Dendritic cell treated with granulocyte-macrophage colony-stimulating factor and Interleukin-4, amounts not matched to agents 40 ng/mL and 50 ng/mL, for 4 days (primary cell): ENCODE measurements at regions of chr10 and their contacts with region 1.

Region 1: GRCh38 chr10:98858525-98858924 is 377.1 kb downstream of the HPSE2 start:
- H3K4me3 Mint-ChIP-seq: no peak overlapping the region
- H3K27ac Mint-ChIP-seq: no peak overlapping the region
- H3K4me1 Mint-ChIP-seq: no peaks in the 10 kb centered on the region
- H3K27me3 Mint-ChIP-seq: peaks cover 1% of the 10 kb centered on the region

Region 2: GRCh38 chr10:98916526-98917120 is 58.1 kb after region 1 on chr10:
- intact Hi-C with region 1: loop called (anchors 10 kb)
- H3K4me3 Mint-ChIP-seq: no peak overlapping the region
- H3K27ac Mint-ChIP-seq: no peak overlapping the region
- H3K4me1 Mint-ChIP-seq: peaks cover 5% of the 10 kb centered on the region
- H3K27me3 Mint-ChIP-seq: peaks cover under 1% of the 10 kb centered on the region